ENCODE measurements at regions of chr16 and their contacts with region 1.

Region 1: GRCh38 chr16:56493126-56493525 is 26.7 kb downstream of the BBS2 start:
- DNase-seq: no peak
- H3K4me3 ChIP-seq: no peak overlapping the region
- CTCF ChIP-seq: no peak

Region 2: DNA sequence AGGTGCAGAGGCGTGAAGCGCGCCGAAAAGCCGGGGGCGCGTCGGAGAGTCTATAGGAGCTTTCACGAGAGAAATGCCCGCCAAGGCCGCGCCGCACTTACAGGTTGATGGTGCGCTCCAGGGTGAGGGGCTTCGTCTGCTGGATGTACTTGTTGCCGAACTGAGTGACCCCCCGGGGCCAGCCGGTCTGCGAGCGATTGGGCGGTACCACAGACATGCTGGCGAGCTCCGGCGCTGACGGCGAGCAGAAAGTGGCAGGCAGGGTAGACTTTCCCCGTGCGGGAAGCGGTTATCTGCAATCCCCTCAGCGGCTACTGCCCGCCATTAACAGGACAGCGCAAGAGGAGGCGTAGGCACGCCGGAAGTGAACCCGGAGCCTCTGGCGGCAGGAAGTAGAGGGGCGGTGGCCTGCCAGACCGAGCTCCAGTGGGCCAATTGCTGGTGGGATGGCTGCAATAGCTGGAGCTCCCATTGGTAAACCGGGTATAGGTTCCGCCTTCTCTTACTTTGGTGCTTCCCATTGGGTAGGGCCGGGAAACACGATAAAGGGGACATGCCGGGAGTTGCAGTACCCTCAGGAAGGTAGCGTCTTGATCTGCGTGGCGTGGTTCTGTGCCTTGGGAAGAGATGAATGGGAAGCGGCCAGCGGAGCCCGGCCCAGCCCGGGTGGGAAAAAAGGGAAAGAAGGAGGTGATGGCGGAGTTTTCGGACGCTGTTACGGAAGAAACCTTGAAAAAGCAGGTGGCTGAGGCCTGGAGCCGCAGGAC is 42.0 kb before region 1 on chr16 and contains the starts of genes NUDT21 and OGFOD1:
- CTCF ChIA-PET with region 1: no interaction called
- POLR2A ChIA-PET with region 1: no interaction called
- DNase-seq: peak; percentile 86
- H3K4me3 ChIP-seq: peak within 1 kb of the TSS; percentile 90
- CTCF ChIP-seq: no peak

Region 3: GRCh38 chr16:56513972-56514371 is 20.8 kb after region 1 on chr16:
- CTCF ChIA-PET with region 1: interaction called, 14 read pairs
- POLR2A ChIA-PET with region 1: no interaction called
- DNase-seq: peak; percentile 16
- H3K4me3 ChIP-seq: no peak overlapping the region
- CTCF ChIP-seq: peak; percentile 58

Region 4: GRCh38 chr16:56589141-56590039 is 96.3 kb after region 1 on chr16 and contains the start of gene MT3:
- CTCF ChIA-PET with region 1: no interaction called
- POLR2A ChIA-PET with region 1: no interaction called
- DNase-seq: no peak
- H3K4me3 ChIP-seq: peak within 1 kb of the TSS; percentile 46
- CTCF ChIP-seq: no peak